Panc1 (cell line): ENCODE measurements at regions of chr12 and their contacts with region 1.

Region 1: DNA sequence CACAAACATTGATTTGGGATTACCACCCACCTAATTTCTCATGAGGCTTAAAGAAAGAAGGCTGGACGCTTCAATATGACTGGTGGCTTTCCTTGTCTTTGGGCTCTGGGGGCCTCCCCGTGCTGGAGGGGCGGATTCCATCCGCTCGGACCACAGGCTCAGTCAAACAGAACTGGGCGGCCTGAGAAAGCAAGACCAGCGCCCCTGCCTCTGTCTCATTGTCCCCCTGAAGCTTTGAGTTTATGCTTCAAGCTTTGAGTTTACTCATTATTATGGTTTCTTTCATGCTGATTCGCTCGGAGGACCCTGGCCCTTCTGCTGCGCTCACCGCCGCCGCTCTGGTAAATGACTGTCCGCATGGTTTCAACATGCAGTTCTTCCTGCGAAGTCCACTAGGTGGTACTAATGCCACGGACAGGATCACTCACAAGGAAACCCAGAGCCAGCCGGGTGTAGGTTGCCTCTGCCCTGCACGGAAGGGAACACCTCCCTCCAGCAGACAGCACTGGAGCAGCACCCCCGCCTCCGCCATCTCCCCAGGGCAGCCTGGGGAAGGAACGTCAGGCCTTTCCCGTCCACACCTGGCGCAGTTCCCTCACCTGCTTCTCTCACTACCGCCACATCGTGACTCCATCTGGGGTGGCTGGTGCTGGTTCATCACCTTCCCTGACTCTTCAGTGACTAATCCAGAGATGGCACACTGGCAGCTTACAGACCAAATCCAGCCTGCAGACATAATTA is 13.2 kb upstream of the TIGAR start:
- DNase-seq: peak; percentile 33
- ATAC-seq: peak; percentile 99
- H3K4me3 ChIP-seq: 0 out of 4 replicates have a peak overlapping the region, but pooled peaks of 1 of the 2 experiments have one; percentile 14
- H3K27ac ChIP-seq: no peak overlapping the region
- H3K4me1 ChIP-seq: no peaks in the 10 kb centered on the region
- H3K27me3 ChIP-seq: no peaks in the 10 kb centered on the region; the same call in 1 of the 2 replicates
- CTCF ChIP-seq: peak; percentile 83

Region 2: GRCh38 chr12:3727877-3728632 is 579.7 kb before region 1 on chr12:
- CTCF ChIA-PET with region 1: no interaction called
- POLR2A ChIA-PET with region 1: interaction called, 17 read pairs
- in situ Hi-C with region 1: no loop called
- intact Hi-C with region 1: no loop called
- DNase-seq: no peak
- ATAC-seq: no peak
- H3K4me3 ChIP-seq: no peak overlapping the region
- H3K27ac ChIP-seq: no peak overlapping the region
- H3K4me1 ChIP-seq: no peaks in the 10 kb centered on the region
- H3K27me3 ChIP-seq: no peaks in the 10 kb centered on the region
- CTCF ChIP-seq: no peak

Region 3: DNA sequence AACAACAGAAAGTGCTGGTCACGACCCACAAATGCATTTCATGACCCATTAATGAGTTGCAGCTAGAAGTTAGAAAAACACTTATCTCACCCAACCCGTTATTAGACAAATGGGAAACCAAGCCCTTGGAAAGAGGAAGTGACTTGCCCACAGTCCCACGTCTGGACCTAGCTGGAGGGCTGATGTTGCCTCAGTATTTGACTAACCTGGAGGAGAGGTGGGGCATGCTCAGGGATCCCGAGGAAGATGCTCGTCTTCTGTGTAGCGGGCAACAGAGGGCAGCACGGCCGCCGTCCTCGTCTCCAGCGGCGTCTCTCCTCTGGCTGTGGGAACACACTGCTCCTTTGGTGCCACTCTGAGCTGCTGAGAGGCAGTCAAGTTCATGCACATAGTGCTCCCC is 21.5 kb before region 1 on chr12:
- CTCF ChIA-PET with region 1: no interaction called
- POLR2A ChIA-PET with region 1: no interaction called
- in situ Hi-C with region 1: no loop called
- intact Hi-C with region 1: no loop called
- DNase-seq: no peak
- ATAC-seq: no peak
- H3K4me3 ChIP-seq: no peak overlapping the region
- H3K27ac ChIP-seq: no peak overlapping the region
- H3K4me1 ChIP-seq: no peaks in the 10 kb centered on the region
- H3K27me3 ChIP-seq: no peaks in the 10 kb centered on the region
- CTCF ChIP-seq: no peak

Region 4: GRCh38 chr12:4526923-4527546 is 219.3 kb after region 1 on chr12:
- CTCF ChIA-PET with region 1: no interaction called
- POLR2A ChIA-PET with region 1: no interaction called
- in situ Hi-C with region 1: no loop called
- intact Hi-C with region 1: loop called (anchors 5 kb)
- DNase-seq: no peak
- ATAC-seq: no peak
- H3K4me3 ChIP-seq: no peak overlapping the region
- H3K27ac ChIP-seq: no peak overlapping the region
- H3K4me1 ChIP-seq: no peaks in the 10 kb centered on the region
- H3K27me3 ChIP-seq: no peaks in the 10 kb centered on the region
- CTCF ChIP-seq: no peak